CD4-positive, alpha-beta memory T cell (primary cell): ENCODE measurements at regions of chr2 and their contacts with region 1.

Region 1: GRCh38 chr2:106953779-106954178 is 67.8 kb upstream of the ST6GAL2 start:
- DNase-seq: no peak
- H3K4me3 ChIP-seq: no peak overlapping the region
- H3K4me3 Mint-ChIP-seq: peak overlapping the region in 1 of 8 donors; percentile 25
- H3K27ac ChIP-seq: no peak overlapping the region
- H3K27ac Mint-ChIP-seq: no peak overlapping the region
- H3K4me1 ChIP-seq: no peaks in the 10 kb centered on the region
- H3K4me1 Mint-ChIP-seq: no peaks in the 10 kb centered on the region
- H3K27me3 ChIP-seq: no peaks in the 10 kb centered on the region
- H3K27me3 Mint-ChIP-seq: peaks cover 0 to 2% of the 10 kb centered on the region in 2 donors

Region 2: DNA sequence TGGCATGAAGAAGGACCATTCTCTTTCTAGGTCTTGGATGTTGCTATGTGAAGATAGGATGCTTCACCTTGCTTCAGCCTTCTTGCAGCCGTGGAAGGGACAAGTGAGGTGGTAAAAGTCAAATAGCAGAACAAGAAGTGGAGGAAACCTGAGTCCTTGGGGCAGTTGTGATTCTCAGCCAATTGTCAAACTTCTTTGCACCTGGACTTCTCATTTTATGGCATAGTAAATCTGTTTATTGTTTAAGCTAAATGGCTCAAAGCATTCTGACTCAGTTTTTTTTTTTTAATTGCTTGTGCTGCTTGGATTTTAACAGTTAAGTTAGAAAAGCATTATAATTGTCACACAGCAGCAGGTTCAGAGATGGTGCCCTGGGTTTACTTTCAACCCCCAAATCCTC is 34.8 kb before region 1 on chr2:
- CTCF ChIA-PET with region 1: no interaction called
- POLR2A ChIA-PET with region 1: no interaction called
- intact Hi-C with region 1: loop called (anchors 1 kb)
- DNase-seq: no peak
- H3K4me3 ChIP-seq: no peak overlapping the region
- H3K4me3 Mint-ChIP-seq: no peak overlapping the region
- H3K27ac ChIP-seq: no peak overlapping the region
- H3K27ac Mint-ChIP-seq: no peak overlapping the region
- H3K4me1 ChIP-seq: no peaks in the 10 kb centered on the region
- H3K4me1 Mint-ChIP-seq: no peaks in the 10 kb centered on the region
- H3K27me3 ChIP-seq: no peaks in the 10 kb centered on the region
- H3K27me3 Mint-ChIP-seq: no peaks in the 10 kb centered on the region